ENCODE measurements at regions of chr5 and their contacts with region 1.

Region 1: GRCh38 chr5:93800988-93801811 is 59.8 kb upstream of the POU5F2 start:
- DNase-seq: peak; percentile 32
- ATAC-seq: peak; percentile 82 to 92

Region 2: GRCh38 chr5:93581743-93582321 is 219.4 kb before region 1 on chr5:
- intact Hi-C with region 1: loop called in 1 of 2 experiments (anchors 1 kb)
- DNase-seq: no peak
- ATAC-seq: peak in 1 of 2 donors; percentile 4

Region 3: DNA sequence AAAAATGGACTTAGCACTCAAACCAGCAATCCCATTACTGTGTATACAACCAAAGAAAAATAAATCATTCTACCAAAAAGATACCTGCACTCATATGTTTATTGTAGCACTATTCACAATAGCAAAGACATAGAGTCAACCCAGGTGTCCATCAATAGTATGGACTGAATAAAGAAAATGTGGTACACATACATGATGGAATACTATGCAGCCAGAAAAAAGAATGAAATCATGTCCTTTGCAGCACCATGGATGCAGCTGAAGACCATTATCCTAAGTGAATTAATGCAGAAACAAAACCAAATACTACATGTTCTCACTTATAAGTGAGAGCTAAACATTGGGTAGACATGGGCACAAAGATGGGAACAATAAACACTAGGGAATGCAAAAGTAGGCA is 177.0 kb after region 1 on chr5:
- intact Hi-C with region 1: no loop called
- DNase-seq: no peak
- ATAC-seq: no peak